Activated CD8-positive, alpha-beta memory T cell treated with anti-CD3 and anti-CD28 coated beads, Interleukin-2, amount 10 ng/mL, durations not matched to agents 7 days and 5 days (primary cell): ENCODE measurements at regions of chr17 and their contacts with region 1.

Region 1: DNA sequence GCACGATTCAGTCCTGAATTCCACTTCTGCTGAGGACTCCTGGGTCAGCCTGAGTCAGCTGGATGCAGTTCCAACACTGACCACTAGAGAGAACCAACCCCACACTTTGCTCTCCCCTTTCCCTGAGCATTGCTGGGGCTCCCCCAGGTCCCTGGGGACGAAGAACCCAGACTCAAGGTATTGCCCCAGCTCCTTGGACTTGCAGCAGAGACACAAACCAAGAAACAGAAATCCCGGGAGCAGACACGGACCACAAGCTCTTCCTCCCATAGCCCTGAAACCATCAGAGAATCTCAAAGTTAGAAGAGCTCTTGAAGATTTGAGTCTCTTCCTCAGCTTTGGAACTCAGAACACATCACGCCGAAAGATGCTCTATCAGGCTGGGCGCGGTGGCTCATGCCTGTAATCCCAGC is 678 bp upstream of the GH1 start:
- DNase-seq: peak; percentile 81
- ATAC-seq: peak; percentile 96
- H3K4me3 Mint-ChIP-seq: no peak overlapping the region
- H3K27ac Mint-ChIP-seq: no peak overlapping the region
- H3K4me1 Mint-ChIP-seq: peaks cover 5% of the 10 kb centered on the region
- H3K27me3 Mint-ChIP-seq: peaks cover 11% of the 10 kb centered on the region

Region 2: GRCh38 chr17:63904316-63904715 is 15.0 kb before region 1 on chr17:
- CTCF ChIA-PET with region 1: interaction called, 19 read pairs
- DNase-seq: no peak
- ATAC-seq: no peak
- H3K4me3 Mint-ChIP-seq: no peak overlapping the region
- H3K27ac Mint-ChIP-seq: no peak overlapping the region
- H3K4me1 Mint-ChIP-seq: peaks cover 5% of the 10 kb centered on the region
- H3K27me3 Mint-ChIP-seq: peaks cover 43% of the 10 kb centered on the region

Region 3: DNA sequence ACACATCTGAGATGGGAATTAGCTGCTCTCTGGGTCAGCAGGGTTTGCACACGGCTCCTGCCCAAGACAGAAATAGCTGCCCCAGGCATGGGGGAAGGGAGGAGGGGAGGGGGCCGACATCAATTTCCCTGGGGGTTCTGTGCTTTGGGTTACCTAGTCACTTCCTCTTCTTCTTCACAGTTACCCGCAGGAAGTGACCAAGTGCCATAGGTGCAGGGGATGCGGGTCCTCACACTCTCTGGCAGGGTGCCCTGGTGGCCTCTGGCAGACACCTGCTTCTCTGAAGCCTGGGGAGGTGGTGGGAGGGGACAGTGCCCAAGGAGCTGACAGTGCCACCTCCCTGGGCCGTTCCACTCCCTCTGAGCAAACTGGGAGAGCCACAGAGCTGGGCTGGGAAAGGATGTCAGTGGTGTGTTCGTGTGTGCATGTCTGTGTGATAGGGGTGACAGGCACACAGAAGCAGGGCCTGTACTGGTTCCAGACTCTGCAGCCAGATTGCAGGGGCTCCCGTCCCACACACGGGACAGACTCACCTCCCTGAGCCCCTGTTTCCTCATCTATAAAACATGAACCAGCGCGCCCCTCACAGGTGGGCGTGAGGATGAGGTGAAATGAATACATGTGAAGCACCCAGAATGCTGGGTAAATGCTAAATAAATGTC is 35.2 kb after region 1 on chr17:
- CTCF ChIA-PET with region 1: interaction called, 45 read pairs
- DNase-seq: peak; percentile 61
- ATAC-seq: peak; percentile 64
- H3K4me3 Mint-ChIP-seq: no peak overlapping the region
- H3K27ac Mint-ChIP-seq: peak overlapping the region; percentile 63
- H3K4me1 Mint-ChIP-seq: peaks cover 20% of the 10 kb centered on the region
- H3K27me3 Mint-ChIP-seq: no peaks in the 10 kb centered on the region

Region 4: GRCh38 chr17:63984651-63985386 is 65.5 kb after region 1 on chr17:
- CTCF ChIA-PET with region 1: interaction called, 43 read pairs
- DNase-seq: peak; percentile 67
- ATAC-seq: peak; percentile 83
- H3K4me3 Mint-ChIP-seq: no peak overlapping the region
- H3K27ac Mint-ChIP-seq: peak overlapping the region; percentile 72
- H3K4me1 Mint-ChIP-seq: peaks cover 15% of the 10 kb centered on the region
- H3K27me3 Mint-ChIP-seq: no peaks in the 10 kb centered on the region

Region 5: GRCh38 chr17:64020056-64020766 is 100.9 kb after region 1 on chr17 and contains the start of gene ICAM2:
- CTCF ChIA-PET with region 1: interaction called, 94 read pairs
- DNase-seq: peak; percentile 97
- ATAC-seq: peak; percentile 75
- H3K4me3 Mint-ChIP-seq: peak within 1 kb of the TSS; percentile 92
- H3K27ac Mint-ChIP-seq: peak within 1 kb of the TSS; percentile 98
- H3K4me1 Mint-ChIP-seq: peaks cover 73% of the 10 kb centered on the region
- H3K27me3 Mint-ChIP-seq: no peaks in the 10 kb centered on the region
- total RNA-seq, gene ICAM2: 39.0 to 40.6 TPM